Activated T-helper 1 cell treated with anti-CD3 and anti-CD28 coated beads, Interleukin-12 subunit alpha, Interleukin-12 subunit beta, Interleukin-2, Interleukin-4 antibody, amounts not matched to agents 30 ng/mL and 10 ng/mL and 1 ng/mL, durations not matched to agents 14 hours and 24 hours and 36 hours (primary cell): ENCODE measurements at regions of chr2 and their contacts with region 1.

Region 1: GRCh38 chr2:60873381-60873780 is 8.0 kb upstream of the REL start:
- DNase-seq: no peak
- H3K4me3 Mint-ChIP-seq: no peak overlapping the region
- H3K27ac Mint-ChIP-seq: no peak overlapping the region
- H3K4me1 Mint-ChIP-seq: peaks cover 39% of the 10 kb centered on the region
- H3K27me3 Mint-ChIP-seq: no peaks in the 10 kb centered on the region

Region 2: GRCh38 chr2:59413751-59414570 is 1459.4 kb before region 1 on chr2:
- intact Hi-C with region 1: no loop called
- DNase-seq: no peak
- H3K4me3 Mint-ChIP-seq: no peak overlapping the region
- H3K27ac Mint-ChIP-seq: no peak overlapping the region
- H3K4me1 Mint-ChIP-seq: no peaks in the 10 kb centered on the region
- H3K27me3 Mint-ChIP-seq: no peaks in the 10 kb centered on the region

Region 3: DNA sequence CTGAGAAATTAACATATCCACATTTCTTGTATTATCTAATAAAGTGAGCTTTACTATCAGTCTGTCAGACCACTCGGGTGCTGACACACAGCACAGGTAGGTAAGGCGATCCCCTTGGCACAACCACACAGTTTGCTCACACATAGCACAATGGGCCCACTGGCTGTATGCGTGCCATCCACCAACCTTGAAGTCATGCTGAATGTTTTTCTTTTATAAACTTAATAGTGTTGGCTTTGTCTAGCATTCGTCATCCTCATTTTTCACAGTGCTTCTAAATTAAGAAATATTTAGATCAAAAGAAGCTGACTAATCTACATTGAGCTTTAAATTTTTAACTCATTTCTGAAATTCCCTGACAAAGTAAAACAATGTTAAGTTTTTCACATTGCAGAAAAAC is 167.4 kb before region 1 on chr2:
- intact Hi-C with region 1: no loop called
- DNase-seq: no peak
- H3K4me3 Mint-ChIP-seq: no peak overlapping the region
- H3K27ac Mint-ChIP-seq: no peak overlapping the region
- H3K4me1 Mint-ChIP-seq: no peaks in the 10 kb centered on the region
- H3K27me3 Mint-ChIP-seq: peaks cover 3% of the 10 kb centered on the region

Region 4: DNA sequence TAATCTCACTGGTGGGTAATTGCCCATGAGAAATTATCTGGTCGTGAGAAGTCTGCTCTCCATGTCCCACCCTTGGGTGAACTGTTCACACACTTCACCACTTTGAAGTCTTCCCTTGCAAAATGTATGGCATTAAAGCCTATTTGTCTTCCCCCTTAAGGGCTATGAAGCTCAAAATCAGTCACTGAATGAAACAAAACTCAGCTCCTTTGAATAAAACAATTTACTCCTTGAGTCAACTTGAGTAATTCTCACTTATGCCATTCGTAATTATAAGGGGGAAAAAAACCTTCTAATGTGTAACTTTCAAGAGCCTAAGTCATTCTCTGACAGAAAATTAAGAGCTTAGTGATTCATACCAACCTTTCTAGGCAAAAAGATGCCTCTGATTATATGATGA is 40.8 kb before region 1 on chr2:
- intact Hi-C with region 1: loop called (anchors 1 kb)
- DNase-seq: no peak
- H3K4me3 Mint-ChIP-seq: no peak overlapping the region
- H3K27ac Mint-ChIP-seq: no peak overlapping the region
- H3K4me1 Mint-ChIP-seq: peaks cover 14% of the 10 kb centered on the region
- H3K27me3 Mint-ChIP-seq: peaks cover 2% of the 10 kb centered on the region